AG04449 (cell line): ENCODE measurements at regions of chr14 and their contacts with region 1.

Region 1: DNA sequence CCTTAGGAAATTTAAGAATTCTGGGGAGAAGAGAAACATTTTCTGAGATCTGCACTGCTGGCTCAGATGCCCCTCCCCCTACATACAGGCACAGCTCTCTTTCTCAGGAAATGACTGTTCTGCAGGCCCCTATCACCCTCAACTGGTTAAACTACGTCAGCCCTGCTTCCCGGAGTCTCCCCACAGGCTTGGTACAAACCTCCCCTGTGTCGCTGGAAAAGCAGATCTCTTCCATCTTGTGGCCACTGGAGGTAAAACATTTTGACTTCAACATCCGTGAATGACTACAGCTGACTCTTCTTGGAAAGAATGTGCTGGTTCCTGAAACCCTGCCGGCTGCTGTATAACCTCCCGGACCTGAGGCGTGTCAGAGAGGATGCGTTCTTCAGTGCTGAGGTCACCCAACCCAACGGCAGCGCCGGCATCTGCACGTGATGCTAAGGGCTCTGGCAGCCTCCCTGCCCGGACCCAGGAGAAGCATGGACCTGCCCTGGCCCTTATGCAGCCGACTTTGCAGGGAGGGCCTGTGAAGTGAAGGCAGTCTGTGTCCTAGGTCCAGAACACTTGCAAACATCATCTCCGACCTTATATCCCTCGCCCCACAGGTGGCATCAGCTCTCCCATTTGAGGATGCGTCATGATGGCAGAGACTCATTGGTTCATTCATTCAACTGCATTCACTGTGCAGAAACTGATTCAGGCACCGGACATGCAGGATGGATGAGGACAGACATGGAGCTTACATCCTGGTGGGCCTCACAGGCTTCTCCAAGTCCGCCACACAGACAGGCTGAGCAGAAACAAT is 129.3 kb downstream of the GCH1 start:
- DNase-seq: peak; percentile 99
- H3K4me3 ChIP-seq: peak overlapping the region; percentile 19
- CTCF ChIP-seq: peak; percentile 73

Region 2: GRCh38 chr14:54411371-54411770 is 362.0 kb before region 1 on chr14:
- CTCF ChIA-PET with region 1: no interaction called
- POLR2A ChIA-PET with region 1: no interaction called
- DNase-seq: no peak
- H3K4me3 ChIP-seq: no peak overlapping the region
- CTCF ChIP-seq: no peak

Region 3: GRCh38 chr14:54488646-54489317 is 284.6 kb before region 1 on chr14 and contains the start of gene GMFB:
- CTCF ChIA-PET with region 1: interaction called, 10 read pairs
- POLR2A ChIA-PET with region 1: no interaction called
- DNase-seq: peak; percentile 55
- H3K4me3 ChIP-seq: peak within 1 kb of the TSS; percentile 96
- CTCF ChIP-seq: peak; percentile 30

Region 4: GRCh38 chr14:54555651-54556050 is 217.7 kb before region 1 on chr14:
- CTCF ChIA-PET with region 1: interaction called, 247 read pairs
- POLR2A ChIA-PET with region 1: no interaction called
- DNase-seq: no peak
- H3K4me3 ChIP-seq: no peak overlapping the region
- CTCF ChIP-seq: peak; percentile 17

Region 5: DNA sequence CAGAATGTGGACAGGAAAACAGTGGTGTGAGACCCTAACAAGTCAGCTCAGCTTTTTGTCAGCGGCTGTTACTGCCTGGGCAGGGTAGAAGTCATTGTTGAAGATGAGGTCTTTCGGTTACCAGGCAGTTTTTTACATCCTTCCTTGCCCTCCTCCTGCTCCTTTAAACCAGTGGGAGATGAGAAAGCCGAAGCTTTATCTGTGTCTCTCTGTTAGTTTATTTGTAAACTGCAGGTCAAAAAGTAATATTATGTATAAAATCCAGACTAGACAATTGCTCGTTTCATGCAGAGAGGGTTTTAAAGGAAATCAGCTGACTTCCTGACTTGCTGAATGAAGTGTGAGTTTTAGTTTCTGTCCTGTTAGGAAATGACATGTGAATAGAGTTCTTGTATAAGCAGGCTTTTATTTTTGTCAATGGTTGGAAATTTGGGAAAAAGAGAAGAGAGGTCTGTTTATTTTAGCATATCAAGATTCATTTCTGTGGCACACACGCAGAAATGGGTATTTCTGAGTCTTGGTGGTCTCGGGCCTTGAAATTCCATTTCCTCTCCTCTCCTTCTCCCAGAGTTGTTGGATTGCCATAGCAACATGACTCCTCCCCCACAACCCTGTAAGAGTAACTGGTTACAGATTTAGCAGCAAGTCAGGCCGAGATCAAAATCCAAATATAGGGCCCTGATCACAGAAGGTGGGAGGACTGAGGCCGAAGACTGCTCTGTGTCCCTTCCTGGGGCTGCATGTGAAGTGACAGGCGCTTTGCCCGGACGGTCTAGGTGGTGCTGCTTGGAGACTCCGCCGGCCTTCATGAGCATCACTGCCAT is 145.6 kb before region 1 on chr14:
- CTCF ChIA-PET with region 1: interaction called, 12 read pairs
- POLR2A ChIA-PET with region 1: no interaction called
- DNase-seq: no peak
- H3K4me3 ChIP-seq: peak overlapping the region; percentile 32
- CTCF ChIP-seq: no peak

Region 6: DNA sequence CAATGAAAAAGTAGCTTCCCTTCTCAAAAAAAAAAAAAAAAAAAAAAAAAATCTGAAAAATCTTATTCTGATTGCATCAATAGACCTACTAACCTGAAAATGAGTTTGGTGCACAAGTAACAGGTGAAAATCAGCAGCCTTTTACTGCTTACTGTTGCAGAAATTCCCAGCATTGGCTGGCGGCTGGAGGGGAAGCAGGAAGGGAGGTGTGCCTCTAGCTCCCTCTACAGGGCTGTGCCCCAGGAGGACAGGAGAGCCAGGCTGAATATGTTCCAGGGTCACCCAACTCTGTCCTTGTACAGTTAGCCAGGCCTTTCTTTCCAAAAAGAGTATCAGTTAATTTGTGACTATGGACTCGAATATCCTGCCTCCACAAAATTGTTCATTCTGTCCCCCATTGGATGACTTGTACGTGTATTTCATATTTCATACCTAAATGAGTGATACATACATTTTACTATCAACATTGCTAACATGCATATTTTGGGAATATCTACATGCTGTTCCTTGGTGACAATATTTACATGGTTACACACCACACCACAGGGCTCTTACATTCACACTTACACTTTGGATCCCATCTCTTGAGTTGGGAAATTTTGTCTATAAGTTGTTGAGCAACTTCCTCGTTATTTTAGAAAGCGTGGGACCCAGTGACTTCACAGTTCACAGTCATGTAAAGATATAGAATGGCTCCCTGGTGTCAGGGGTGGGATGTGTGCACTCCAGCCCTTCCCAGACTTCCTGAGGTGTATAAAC is 81.7 kb before region 1 on chr14:
- CTCF ChIA-PET with region 1: interaction called, 50 read pairs
- POLR2A ChIA-PET with region 1: no interaction called
- DNase-seq: no peak
- H3K4me3 ChIP-seq: no peak overlapping the region
- CTCF ChIP-seq: peak; percentile 94

Region 7: GRCh38 chr14:54796961-54797360 is 23.6 kb after region 1 on chr14:
- CTCF ChIA-PET with region 1: interaction called, 38 read pairs
- POLR2A ChIA-PET with region 1: no interaction called
- DNase-seq: no peak
- H3K4me3 ChIP-seq: no peak overlapping the region
- CTCF ChIP-seq: no peak

Region 8: GRCh38 chr14:54857830-54858269 is 84.5 kb after region 1 on chr14:
- CTCF ChIA-PET with region 1: no interaction called
- POLR2A ChIA-PET with region 1: no interaction called
- DNase-seq: no peak
- H3K4me3 ChIP-seq: no peak overlapping the region
- CTCF ChIP-seq: no peak

Region 9: GRCh38 chr14:54955143-54955542 is 181.8 kb after region 1 on chr14:
- CTCF ChIA-PET with region 1: no interaction called
- POLR2A ChIA-PET with region 1: no interaction called
- DNase-seq: no peak
- H3K4me3 ChIP-seq: no peak overlapping the region
- CTCF ChIP-seq: no peak